MCF 10A (cell line): ENCODE measurements at regions of chr20 and their contacts with region 1.

Region 1: DNA sequence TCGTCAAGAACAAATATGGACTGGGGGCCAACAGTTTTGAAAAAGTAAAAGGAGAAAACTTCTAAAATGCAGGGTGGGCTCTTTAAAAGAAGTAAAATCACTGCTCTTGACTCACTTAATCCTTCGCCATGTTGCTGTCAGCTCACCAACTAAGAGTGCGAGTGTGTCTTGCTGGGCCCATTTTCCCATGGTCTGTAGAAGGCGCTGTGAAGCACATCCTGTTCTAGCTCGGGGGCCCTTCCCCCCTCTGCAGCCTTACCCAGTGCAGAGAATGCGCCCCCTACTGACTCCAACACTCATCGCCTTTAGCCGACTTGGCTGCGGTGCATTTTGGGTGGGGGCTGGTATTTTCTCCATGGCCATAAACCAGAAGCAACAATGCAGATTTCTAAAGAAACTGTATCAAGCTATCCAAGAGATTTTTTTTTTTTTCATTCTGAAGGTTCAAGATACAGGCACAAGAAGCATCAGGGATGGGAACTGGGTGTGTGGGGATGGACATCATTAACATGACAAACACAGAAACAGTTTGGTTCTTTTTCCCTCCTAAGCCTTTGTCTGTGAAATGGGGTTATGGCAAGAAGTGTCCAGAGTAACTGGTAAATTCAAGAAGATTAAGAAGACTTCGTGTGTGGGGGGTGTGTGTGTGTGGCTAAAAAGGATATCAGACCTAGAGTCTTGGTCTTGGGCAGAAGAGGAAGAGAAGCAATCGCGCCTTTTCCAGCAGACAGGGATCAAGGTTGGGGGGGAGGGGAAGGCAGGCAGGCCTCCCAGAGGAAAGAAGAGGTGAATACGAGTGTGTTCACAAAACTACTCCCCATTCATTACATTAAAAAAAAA is 1.7 kb downstream of the ADNP start:
- DNase-seq: peak; percentile 96
- H3K4me3 Mint-ChIP-seq: peak overlapping the region; percentile 90
- H3K27ac Mint-ChIP-seq: peak overlapping the region; percentile 73
- H3K4me1 Mint-ChIP-seq: peaks cover 37% of the 10 kb centered on the region
- H3K27me3 Mint-ChIP-seq: no peaks in the 10 kb centered on the region
- CTCF ChIP-seq: peak; percentile 90

Region 2: DNA sequence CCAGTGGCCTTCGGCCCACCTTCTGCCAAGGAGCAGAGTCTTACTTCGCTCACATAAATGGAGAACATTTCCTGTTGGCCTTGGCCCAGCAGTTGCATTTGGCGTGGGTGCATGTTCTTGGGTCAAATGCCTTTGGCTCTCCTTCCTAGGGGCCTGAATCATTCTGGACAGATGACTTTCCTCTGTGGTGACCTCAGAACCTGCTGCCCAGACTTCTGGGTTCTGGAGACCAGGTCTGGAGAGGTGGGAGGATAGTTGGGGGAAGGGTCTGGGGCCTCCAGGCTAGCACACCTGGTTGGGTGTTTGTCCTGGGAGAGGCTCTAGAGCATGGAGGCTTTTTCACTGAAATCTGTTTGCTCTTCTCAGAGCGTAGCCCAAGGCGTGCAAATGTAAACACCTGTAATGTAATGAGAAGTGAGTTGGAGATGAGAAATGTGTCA is 105.3 kb before region 1 on chr20:
- CTCF ChIA-PET with region 1: interaction called, 60 read pairs
- POLR2A ChIA-PET with region 1: interaction called, 12 read pairs
- intact Hi-C with region 1: no loop called
- DNase-seq: peak; percentile 89
- H3K4me3 Mint-ChIP-seq: no peak overlapping the region
- H3K27ac Mint-ChIP-seq: peak overlapping the region; percentile 40
- H3K4me1 Mint-ChIP-seq: peaks cover 9% of the 10 kb centered on the region
- H3K27me3 Mint-ChIP-seq: no peaks in the 10 kb centered on the region
- CTCF ChIP-seq: no peak

Region 3: DNA sequence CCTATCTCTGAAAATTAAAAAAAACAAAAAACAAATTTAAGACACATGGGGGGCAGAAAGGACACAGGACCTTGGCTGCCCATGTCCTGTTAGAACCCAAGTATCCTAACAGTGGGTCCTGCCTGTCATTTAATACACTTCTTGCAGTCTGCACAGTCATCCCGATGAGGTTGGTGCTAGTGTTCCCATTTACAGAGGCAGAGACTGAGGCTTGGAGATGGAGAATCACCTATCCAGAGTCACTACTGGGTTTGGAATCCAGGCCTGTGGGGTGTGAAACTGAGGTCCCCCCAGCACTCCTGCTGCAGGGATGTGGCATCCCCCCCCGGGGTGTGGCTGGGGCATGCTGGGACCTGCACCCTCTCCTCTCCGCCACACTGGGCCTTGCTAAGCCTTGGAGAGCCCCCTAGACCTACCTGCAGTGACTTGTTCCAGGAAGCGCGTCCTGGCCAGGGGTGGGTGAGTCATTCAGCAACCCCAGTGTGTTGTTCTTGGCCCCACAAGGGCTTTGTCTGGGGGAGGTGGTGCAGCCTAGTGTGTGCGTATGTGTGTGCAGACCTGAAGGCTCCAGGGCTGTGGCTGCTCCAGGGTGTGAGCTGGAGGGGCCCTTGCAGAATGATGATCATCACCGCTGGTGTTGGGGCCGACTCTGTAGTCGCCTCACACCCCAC is 85.0 kb before region 1 on chr20:
- CTCF ChIA-PET with region 1: interaction called, 16 read pairs
- POLR2A ChIA-PET with region 1: interaction called, 149 read pairs
- intact Hi-C with region 1: no loop called
- DNase-seq: peak; percentile 98
- H3K4me3 Mint-ChIP-seq: no peak overlapping the region
- H3K27ac Mint-ChIP-seq: peak overlapping the region; percentile 16
- H3K4me1 Mint-ChIP-seq: peaks cover 36% of the 10 kb centered on the region
- H3K27me3 Mint-ChIP-seq: no peaks in the 10 kb centered on the region
- CTCF ChIP-seq: no peak

Region 4: GRCh38 chr20:50885781-50886486 is 43.6 kb before region 1 on chr20:
- CTCF ChIA-PET with region 1: interaction called, 17 read pairs
- POLR2A ChIA-PET with region 1: interaction called, 8 read pairs
- intact Hi-C with region 1: no loop called
- DNase-seq: no peak
- H3K4me3 Mint-ChIP-seq: no peak overlapping the region
- H3K27ac Mint-ChIP-seq: no peak overlapping the region
- H3K4me1 Mint-ChIP-seq: no peaks in the 10 kb centered on the region
- H3K27me3 Mint-ChIP-seq: no peaks in the 10 kb centered on the region
- CTCF ChIP-seq: no peak

Region 5: GRCh38 chr20:50913690-50914375 is 15.7 kb before region 1 on chr20:
- CTCF ChIA-PET with region 1: interaction called, 55 read pairs
- POLR2A ChIA-PET with region 1: interaction called, 94 read pairs
- intact Hi-C with region 1: no loop called
- DNase-seq: peak; percentile 68
- H3K4me3 Mint-ChIP-seq: no peak overlapping the region
- H3K27ac Mint-ChIP-seq: peak overlapping the region; percentile 6
- H3K4me1 Mint-ChIP-seq: peaks cover 57% of the 10 kb centered on the region
- H3K27me3 Mint-ChIP-seq: no peaks in the 10 kb centered on the region
- CTCF ChIP-seq: no peak

Region 6: DNA sequence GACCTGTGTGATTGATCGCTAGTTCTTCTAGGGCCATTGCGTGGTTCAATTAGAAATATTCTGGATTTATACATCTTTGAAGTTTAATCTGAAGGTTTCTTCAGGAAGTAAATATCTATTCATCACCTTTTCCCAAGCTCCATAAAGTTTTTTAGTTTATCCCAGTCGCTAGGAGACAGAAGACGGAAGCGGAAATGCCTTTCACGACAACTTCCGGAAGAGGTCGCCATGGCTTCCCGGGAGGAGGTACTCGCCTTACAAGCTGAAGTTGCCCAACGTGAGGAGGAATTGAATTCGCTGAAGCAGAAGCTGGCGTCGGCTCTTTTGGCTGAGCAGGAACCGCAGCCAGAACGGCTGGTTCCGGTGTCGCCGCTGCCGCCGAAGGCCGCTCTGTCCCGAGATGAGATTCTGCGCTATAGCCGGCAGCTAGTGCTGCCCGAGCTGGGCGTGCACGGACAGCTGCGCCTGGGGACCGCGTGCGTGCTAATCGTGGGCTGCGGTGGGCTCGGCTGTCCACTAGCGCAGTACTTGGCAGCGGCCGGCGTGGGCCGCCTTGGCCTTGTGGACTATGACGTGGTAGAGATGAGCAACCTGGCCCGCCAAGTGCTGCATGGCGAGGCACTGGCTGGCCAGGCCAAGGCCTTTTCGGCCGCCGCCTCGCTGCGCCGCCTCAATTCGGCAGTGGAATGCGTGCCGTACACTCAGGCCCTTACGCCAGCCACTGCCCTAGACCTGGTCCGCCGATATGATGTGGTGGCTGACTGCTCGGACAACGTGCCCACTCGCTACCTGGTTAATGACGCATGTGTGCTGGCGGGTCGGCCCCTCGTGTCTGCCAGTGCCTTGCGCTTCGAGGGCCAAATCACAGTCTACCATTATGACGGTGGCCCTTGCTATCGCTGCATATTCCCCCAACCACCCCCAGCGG is 29.4 kb after region 1 on chr20 and contains the start of gene MOCS3:
- CTCF ChIA-PET with region 1: interaction called, 4 read pairs
- POLR2A ChIA-PET with region 1: interaction called, 136 read pairs
- intact Hi-C with region 1: no loop called
- DNase-seq: peak; percentile 92
- H3K4me3 Mint-ChIP-seq: peak within 1 kb of the TSS; percentile 91
- H3K27ac Mint-ChIP-seq: peak within 1 kb of the TSS; percentile 100
- H3K4me1 Mint-ChIP-seq: peaks cover 15% of the 10 kb centered on the region
- H3K27me3 Mint-ChIP-seq: no peaks in the 10 kb centered on the region
- CTCF ChIP-seq: no peak
- total RNA-seq, gene MOCS3: 5.8 and 6.0 TPM in 2 replicates